ENCODE measurements at regions of chr9 and their contacts with region 1.

Region 1: DNA sequence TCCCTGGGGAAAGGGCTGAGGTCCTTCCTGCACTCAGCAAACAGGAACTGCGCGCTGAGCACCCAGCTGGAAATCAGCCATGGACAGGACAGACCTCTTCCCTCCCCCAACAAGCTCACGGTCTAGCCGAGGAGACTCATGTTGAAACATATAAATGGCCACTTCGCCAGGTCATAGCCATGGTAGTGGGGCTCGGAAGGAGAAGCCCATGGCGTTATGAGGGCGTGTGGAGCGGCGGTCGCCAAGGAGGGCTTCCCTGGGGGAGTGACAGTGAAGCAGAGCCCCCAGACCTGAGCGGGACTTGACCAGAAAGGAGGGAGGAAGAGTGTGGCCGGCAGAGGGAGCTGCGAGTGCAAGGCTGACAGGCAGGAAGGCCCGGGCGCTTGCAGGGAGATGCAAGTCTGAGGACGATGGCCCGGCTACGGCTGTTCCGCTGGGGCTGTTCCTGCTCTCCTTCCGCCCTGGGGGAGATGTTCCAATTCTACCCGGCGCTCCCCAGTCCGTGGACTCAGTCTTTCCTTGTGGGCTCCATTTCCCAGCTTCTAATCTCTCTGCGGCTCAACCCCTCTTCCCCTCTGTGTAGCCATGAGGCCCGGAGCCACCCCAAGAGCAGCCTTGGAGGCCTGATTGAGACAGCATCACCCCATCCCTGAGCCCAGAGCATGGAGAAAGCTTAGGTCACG is 43.9 kb upstream of the PRRC2B start:
- DNase-seq: peak; percentile 95
- ATAC-seq: peak; percentile 99
- H3K4me3 Mint-ChIP-seq: peak overlapping the region; percentile 38
- H3K27ac Mint-ChIP-seq: peak overlapping the region; percentile 69
- H3K4me1 Mint-ChIP-seq: peaks cover 7% of the 10 kb centered on the region
- H3K27me3 Mint-ChIP-seq: no peaks in the 10 kb centered on the region
- CTCF ChIP-seq: peak; percentile 81

Region 2: DNA sequence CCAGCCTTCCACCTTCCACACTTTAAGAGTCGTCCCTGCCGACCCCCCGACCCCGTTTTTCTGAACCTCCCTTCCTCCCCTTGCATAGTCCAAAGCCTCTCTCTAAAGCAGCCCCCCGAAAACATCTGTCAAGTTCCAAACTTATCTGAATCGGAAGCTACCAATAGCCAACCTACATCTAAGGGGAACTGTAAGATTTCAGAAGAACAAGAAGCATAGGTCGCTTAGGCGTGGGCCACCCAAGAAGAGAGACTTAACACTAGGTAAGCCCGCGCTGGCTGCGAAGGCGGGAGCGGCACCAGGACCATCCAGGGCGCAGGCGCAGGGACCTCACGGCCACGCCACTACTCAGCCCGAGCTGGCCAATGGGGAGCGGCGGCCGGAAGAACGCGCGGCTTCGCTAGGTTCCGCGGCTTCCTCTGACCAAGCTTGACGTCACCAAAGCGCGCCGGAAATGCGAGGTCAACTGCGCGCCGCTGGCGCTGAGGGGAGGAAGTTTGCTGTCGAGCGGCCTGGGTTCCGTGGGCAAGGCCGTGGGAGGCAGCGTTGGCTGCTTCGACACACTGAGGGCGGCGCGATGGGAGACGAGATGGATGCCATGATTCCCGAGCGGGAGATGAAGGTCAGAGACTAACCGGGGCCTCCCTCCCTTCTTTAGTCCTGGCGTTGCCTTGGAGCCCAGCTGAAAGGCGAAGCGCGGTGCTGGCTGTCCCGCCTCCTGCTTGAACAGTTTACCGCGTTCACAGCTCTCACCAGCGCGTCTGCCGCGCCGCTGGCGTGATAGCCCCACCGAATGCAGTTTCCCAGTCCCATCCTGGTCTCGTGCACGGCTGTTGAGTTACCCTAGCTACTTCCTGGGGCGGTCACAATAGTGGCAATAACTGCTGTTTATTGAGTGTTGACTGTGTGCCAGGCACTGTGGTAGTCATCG is 224.6 kb before region 1 on chr9 and contains the start of gene NUP214:
- CTCF ChIA-PET with region 1: interaction called, 10 read pairs
- POLR2A ChIA-PET with region 1: interaction called, 4 read pairs
- intact Hi-C with region 1: no loop called
- DNase-seq: peak; percentile 99
- ATAC-seq: peak; percentile 99
- H3K4me3 Mint-ChIP-seq: peak within 1 kb of the TSS; percentile 91
- H3K27ac Mint-ChIP-seq: peak within 1 kb of the TSS; percentile 95
- H3K4me1 Mint-ChIP-seq: peaks cover 31% of the 10 kb centered on the region
- H3K27me3 Mint-ChIP-seq: no peaks in the 10 kb centered on the region
- CTCF ChIP-seq: no peak
- total RNA-seq, gene NUP214: 57.6 to 58.3 TPM

Region 3: GRCh38 chr9:131366761-131367401 is 16.9 kb after region 1 on chr9:
- CTCF ChIA-PET with region 1: interaction called, 30 read pairs
- POLR2A ChIA-PET with region 1: no interaction called
- intact Hi-C with region 1: no loop called
- DNase-seq: peak; percentile 30
- ATAC-seq: peak; percentile 47
- H3K4me3 Mint-ChIP-seq: no peak overlapping the region
- H3K27ac Mint-ChIP-seq: no peak overlapping the region
- H3K4me1 Mint-ChIP-seq: peaks cover 5% of the 10 kb centered on the region
- H3K27me3 Mint-ChIP-seq: no peaks in the 10 kb centered on the region
- CTCF ChIP-seq: no peak

Region 4: GRCh38 chr9:131407717-131408195 is 57.7 kb after region 1 on chr9:
- CTCF ChIA-PET with region 1: interaction called, 27 read pairs
- POLR2A ChIA-PET with region 1: no interaction called
- intact Hi-C with region 1: no loop called
- DNase-seq: peak; percentile 61
- ATAC-seq: peak; percentile 45
- H3K4me3 Mint-ChIP-seq: peak overlapping the region; percentile 60
- H3K27ac Mint-ChIP-seq: peak overlapping the region; percentile 79
- H3K4me1 Mint-ChIP-seq: peaks cover 91% of the 10 kb centered on the region
- H3K27me3 Mint-ChIP-seq: no peaks in the 10 kb centered on the region
- CTCF ChIP-seq: peak; percentile 54

Region 5: DNA sequence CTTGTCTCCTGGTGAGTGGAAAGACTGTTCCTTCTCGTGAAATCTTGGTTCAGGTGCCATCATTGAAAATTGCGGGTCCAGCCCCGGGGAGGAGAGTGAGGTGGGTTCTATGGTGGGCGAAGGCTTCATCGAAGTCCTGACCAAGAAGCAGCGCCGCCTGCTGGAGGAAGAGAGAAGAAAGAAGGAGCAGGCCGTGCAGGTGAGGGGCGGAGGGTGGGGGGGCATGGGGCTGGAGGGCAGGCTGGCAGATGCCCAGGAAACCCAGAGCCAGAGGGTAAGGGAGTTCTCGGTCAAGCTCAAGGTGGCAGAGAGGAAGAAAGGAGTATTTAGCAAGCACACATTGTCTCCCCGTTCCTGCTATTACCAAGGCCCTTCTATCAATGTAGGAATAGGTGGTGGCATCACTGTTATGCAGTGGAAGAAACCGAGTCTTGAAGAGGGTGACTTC is 128.4 kb after region 1 on chr9:
- CTCF ChIA-PET with region 1: interaction called, 12 read pairs
- POLR2A ChIA-PET with region 1: no interaction called
- intact Hi-C with region 1: no loop called
- DNase-seq: peak; percentile 75
- ATAC-seq: peak; percentile 72
- H3K4me3 Mint-ChIP-seq: no peak overlapping the region
- H3K27ac Mint-ChIP-seq: peak overlapping the region; percentile 43
- H3K4me1 Mint-ChIP-seq: peaks cover 10% of the 10 kb centered on the region
- H3K27me3 Mint-ChIP-seq: no peaks in the 10 kb centered on the region
- CTCF ChIP-seq: peak; percentile 70

Region 6: DNA sequence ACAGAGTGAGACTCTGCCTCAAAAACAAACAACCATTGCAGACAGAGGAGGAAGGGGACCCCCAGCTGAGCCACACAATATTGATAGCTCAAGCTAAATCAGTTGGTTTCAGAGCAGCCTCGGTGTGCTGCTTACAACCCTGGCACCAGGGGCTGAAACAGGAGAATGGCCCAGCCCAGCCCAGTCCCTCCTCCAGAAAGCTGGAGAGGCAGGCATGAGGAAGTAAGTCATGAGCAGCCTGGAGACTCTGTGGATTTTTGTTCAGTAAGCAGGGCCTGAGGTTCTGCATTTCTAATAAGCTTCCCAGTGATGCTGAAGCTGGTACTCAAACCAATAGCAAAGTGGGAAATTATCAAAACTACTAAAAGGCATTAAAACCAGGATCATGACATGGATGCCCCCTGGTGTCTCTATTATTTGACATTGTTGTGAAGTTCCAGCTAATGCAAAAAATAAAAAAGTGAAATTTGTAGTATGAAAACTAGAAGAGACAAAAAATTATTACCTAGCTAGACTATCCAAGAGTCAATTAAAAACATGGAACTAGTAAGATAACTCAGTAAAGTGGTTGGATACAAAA is 209.5 kb after region 1 on chr9:
- CTCF ChIA-PET with region 1: interaction called, 16 read pairs
- POLR2A ChIA-PET with region 1: no interaction called
- intact Hi-C with region 1: no loop called
- DNase-seq: no peak
- ATAC-seq: no peak
- H3K4me3 Mint-ChIP-seq: no peak overlapping the region
- H3K27ac Mint-ChIP-seq: no peak overlapping the region
- H3K4me1 Mint-ChIP-seq: no peaks in the 10 kb centered on the region
- H3K27me3 Mint-ChIP-seq: peaks cover 15% of the 10 kb centered on the region
- CTCF ChIP-seq: no peak

Measured in activated CD8-positive, alpha-beta T cell treated with anti-CD3 and anti-CD28 coated beads for 36 hours (primary cell).